ENCODE measurements at regions of chr9 and their contacts with region 1.

Region 1: GRCh38 chr9:69066955-69067354 is 31.4 kb downstream of the FXN start:
- DNase-seq: no peak
- ATAC-seq: peak in 1 of 8 donors; percentile 30
- H3K4me3 ChIP-seq: no peak overlapping the region
- H3K27ac ChIP-seq: no peak overlapping the region
- H3K4me1 ChIP-seq: peaks cover 0 to 32% (median 6%) of the 10 kb centered on the region in 9 donors
- H3K27me3 ChIP-seq: no peaks in the 10 kb centered on the region
- CTCF ChIP-seq: no peak

Region 2: DNA sequence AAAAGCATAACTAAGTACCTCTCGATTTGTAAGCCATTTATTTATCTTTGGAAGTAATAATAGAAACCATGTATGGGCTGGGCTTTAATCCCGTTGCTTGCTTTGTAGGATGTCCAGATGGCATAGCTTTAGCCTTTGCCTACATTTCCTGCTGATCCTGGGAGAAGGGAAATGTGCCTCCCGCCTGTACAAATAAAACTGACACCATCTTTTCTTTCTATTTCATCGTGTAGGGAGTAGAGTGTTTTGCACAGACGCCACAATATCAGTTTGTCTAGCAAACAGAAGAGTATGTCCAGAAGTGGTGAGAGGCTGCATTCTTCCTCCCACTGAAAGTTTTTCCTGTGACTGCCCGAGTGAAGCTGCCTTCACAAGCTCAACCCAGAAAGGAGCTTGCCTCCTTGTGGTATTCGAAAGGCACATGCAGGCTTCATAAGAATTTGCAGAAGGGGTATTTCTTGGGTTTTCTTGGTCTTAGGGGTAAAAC is 82.4 kb after region 1 on chr9:
- intact Hi-C with region 1: loop called in 1 of 10 experiments (anchors 10 kb)
- DNase-seq: peak in 1 of 2 donors; percentile 28
- ATAC-seq: peak in 7 of 8 donors; percentile 34 to 77 (median 65)
- H3K4me3 ChIP-seq: peak overlapping the region in 2 of 10 donors; percentile 7 to 9
- H3K27ac ChIP-seq: peak overlapping the region in 9 of 10 donors; percentile 0 to 73 (median 60)
- H3K4me1 ChIP-seq: peaks cover 4 to 29% (median 14%) of the 10 kb centered on the region in 9 donors
- H3K27me3 ChIP-seq: no peaks in the 10 kb centered on the region
- CTCF ChIP-seq: peak in 7 of 9 donors; percentile 14 to 60 (median 34)

Measured in heart right ventricle (tissue), 16 donors.